Stomach (tissue), 19 donors: ENCODE measurements at regions of chr18 and their contacts with region 1.

Region 1: GRCh38 chr18:45690975-45691815 is 32.8 kb upstream of the SLC14A1 start:
- DNase-seq: peak; percentile 82 to 92
- H3K4me3 ChIP-seq: no peak overlapping the region
- H3K27ac ChIP-seq: no peak overlapping the region
- H3K4me1 ChIP-seq: peaks cover 0 to 20% (median 4%) of the 10 kb centered on the region in 4 donors
- H3K27me3 ChIP-seq: peaks cover 0 to 5% (median 0%) of the 10 kb centered on the region in 3 donors
- CTCF ChIP-seq: peak in 5 of 7 experiments; percentile 56 to 79 (median 75)
- EP300 ChIP-seq: no peak
- POLR2A ChIP-seq: no peak

Region 2: DNA sequence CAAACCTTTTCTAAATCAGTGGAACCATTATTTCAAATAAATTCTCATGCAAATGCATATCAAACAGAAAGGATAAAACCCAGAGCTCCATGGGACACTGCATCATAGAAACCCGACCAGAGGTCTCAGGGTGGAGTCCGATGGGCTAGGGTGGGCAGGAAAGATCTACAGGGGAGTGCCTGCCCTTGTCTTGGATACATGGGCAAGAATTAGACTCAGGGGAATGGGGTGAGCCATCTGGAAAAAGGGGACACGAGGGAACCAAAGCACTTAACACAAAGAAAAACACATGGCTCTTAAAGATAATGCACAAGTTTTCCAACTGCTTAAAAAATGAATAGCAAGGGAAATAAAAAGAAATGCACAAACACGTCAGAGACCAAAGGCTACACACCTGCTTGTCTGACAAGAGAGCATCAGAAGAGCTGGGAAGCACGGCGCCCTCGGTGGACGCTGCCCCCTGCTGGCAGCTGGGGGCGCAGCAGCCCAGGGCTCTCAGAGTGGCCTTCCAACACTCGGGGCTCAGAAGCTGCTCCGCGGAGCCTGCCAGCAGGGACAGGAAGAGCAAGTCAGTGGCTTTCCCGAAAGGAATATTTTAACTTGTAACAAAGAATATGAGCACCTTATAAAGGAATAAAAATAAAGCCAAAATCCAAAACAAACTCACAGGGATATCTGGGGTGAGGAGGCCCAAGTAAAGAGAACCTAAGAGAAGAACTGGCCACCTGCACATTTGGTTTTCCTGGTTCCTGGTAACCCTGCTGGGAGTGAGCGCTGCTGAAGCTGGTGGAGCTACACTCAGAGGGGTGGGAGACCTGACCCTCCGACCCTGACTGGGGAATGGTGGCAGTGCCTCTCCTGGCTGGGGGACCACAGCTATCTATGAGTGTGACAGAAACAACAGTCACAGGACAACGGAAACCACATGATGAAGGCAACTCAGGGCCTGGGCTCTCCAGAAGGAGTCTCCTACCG is 188.8 kb after region 1 on chr18:
- intact Hi-C with region 1: loop called (anchors 10 kb)
- DNase-seq: peak; percentile 72 to 88
- H3K4me3 ChIP-seq: no peak overlapping the region
- H3K27ac ChIP-seq: no peak overlapping the region
- H3K4me1 ChIP-seq: peaks cover 0 to 10% (median 5%) of the 10 kb centered on the region in 4 donors
- H3K27me3 ChIP-seq: no peaks in the 10 kb centered on the region
- CTCF ChIP-seq: peak in 5 of 7 experiments; percentile 93 to 99 (median 99)
- EP300 ChIP-seq: no peak
- POLR2A ChIP-seq: no peak

Region 3: DNA sequence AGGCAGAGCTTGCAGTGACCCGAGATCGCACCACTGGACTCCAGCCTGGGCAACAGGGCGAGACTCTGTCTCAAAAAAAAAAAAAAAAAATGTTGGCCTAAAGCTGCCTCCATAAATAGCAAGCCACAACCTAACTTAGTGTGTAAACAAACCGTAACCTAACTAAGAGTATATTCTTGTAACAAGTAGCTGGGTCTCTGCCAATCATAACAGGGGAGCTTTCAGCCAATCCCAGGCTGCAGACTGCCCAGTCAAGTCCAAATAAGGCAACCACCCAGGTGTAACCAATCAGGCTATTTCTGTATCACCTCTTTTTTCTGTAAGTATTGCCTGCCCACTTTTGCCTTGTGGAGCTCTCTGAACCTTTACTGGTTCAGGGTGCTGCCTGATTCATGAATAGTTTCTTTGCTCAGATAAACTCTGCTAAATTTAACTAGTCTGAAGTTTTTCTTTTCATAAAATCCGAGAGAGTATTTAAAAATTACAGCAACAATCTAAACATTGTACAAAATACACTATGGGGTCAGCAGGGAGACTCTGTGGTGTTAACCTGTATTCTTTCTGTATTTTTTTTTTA is 376.3 kb after region 1 on chr18:
- intact Hi-C with region 1: loop called (anchors 10 kb)
- DNase-seq: no peak
- H3K4me3 ChIP-seq: no peak overlapping the region
- H3K27ac ChIP-seq: no peak overlapping the region
- H3K4me1 ChIP-seq: peaks cover 8 to 45% (median 28%) of the 10 kb centered on the region in 4 donors
- H3K27me3 ChIP-seq: no peaks in the 10 kb centered on the region
- CTCF ChIP-seq: no peak
- EP300 ChIP-seq: no peak
- POLR2A ChIP-seq: no peak